B cell (primary cell): ENCODE measurements at regions of chr5 and their contacts with region 1.

Region 1: GRCh38 chr5:96807075-96807654 is 580 bp downstream of the ERAP1 start:
- DNase-seq: no peak
- ATAC-seq: peak; percentile 19
- H3K4me3 ChIP-seq: peak overlapping the region; percentile 47 to 86 (median 73)
- H3K4me3 Mint-ChIP-seq: peak overlapping the region; percentile 90
- H3K27ac ChIP-seq: peak overlapping the region; percentile 86 to 90
- H3K27ac Mint-ChIP-seq: peak overlapping the region; percentile 99
- H3K4me1 ChIP-seq: peaks cover 25 to 32% of the 10 kb centered on the region in 2 donors
- H3K4me1 Mint-ChIP-seq: peaks cover 49% of the 10 kb centered on the region
- H3K27me3 ChIP-seq: no peaks in the 10 kb centered on the region
- H3K27me3 Mint-ChIP-seq: no peaks in the 10 kb centered on the region
- CTCF ChIP-seq: no peak

Region 2: DNA sequence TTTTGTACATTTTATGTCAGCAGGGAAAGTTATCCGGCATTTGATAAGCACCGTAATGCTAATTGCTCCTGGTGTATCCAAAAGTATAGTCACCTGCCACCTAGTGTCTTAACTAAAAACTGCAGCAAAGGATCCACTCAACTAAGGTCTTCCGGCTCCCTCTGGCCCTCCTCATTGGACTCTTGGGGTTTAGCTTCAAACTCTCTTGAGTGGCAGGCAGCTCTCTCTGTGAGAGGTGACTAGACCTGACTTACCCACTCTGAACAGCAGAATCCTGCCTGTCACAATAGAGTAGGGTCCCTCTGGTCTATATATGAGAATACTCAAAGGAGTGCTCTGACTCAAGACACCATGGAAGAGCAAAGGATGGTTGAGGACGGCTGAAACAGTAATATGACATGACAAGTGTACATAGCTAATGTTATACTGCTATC is 205.3 kb before region 1 on chr5:
- CTCF ChIA-PET with region 1: no interaction called
- POLR2A ChIA-PET with region 1: no interaction called
- intact Hi-C with region 1: no loop called
- DNase-seq: peak; percentile 72
- ATAC-seq: peak; percentile 70
- H3K4me3 ChIP-seq: no peak overlapping the region
- H3K4me3 Mint-ChIP-seq: no peak overlapping the region
- H3K27ac ChIP-seq: no peak overlapping the region
- H3K27ac Mint-ChIP-seq: no peak overlapping the region
- H3K4me1 ChIP-seq: no peaks in the 10 kb centered on the region
- H3K4me1 Mint-ChIP-seq: no peaks in the 10 kb centered on the region
- H3K27me3 ChIP-seq: peaks cover 0 to 7% (median 0%) of the 10 kb centered on the region in 4 experiments
- H3K27me3 Mint-ChIP-seq: peaks cover 22% of the 10 kb centered on the region
- CTCF ChIP-seq: peak; percentile 90

Region 3: GRCh38 chr5:96876292-96876850 is 69.2 kb after region 1 on chr5 and contains the start of gene ERAP2:
- CTCF ChIA-PET with region 1: interaction called, 3 read pairs
- POLR2A ChIA-PET with region 1: interaction called, 14 read pairs
- intact Hi-C with region 1: loop called (anchors 1 kb)
- DNase-seq: peak; percentile 76
- ATAC-seq: peak; percentile 65
- H3K4me3 ChIP-seq: peak within 1 kb of the TSS; percentile 66 to 100 (median 84)
- H3K4me3 Mint-ChIP-seq: peak within 1 kb of the TSS; percentile 97
- H3K27ac ChIP-seq: peak within 1 kb of the TSS; percentile 69 to 75
- H3K27ac Mint-ChIP-seq: peak within 1 kb of the TSS; percentile 92
- H3K4me1 ChIP-seq: peaks cover 50 to 53% of the 10 kb centered on the region in 2 donors
- H3K4me1 Mint-ChIP-seq: peaks cover 74% of the 10 kb centered on the region
- H3K27me3 ChIP-seq: no peaks in the 10 kb centered on the region
- H3K27me3 Mint-ChIP-seq: no peaks in the 10 kb centered on the region
- CTCF ChIP-seq: no peak
- total RNA-seq, gene ERAP2: 74.2 and 76.5 TPM in 2 replicates

Region 4: GRCh38 chr5:97009212-97009898 is 202.2 kb after region 1 on chr5:
- CTCF ChIA-PET with region 1: no interaction called
- POLR2A ChIA-PET with region 1: interaction called, 17 read pairs
- intact Hi-C with region 1: no loop called
- DNase-seq: peak; percentile 81
- ATAC-seq: peak; percentile 68
- H3K4me3 ChIP-seq: peak overlapping the region in 2 of 5 experiments; percentile 11 to 44
- H3K4me3 Mint-ChIP-seq: peak overlapping the region; percentile 69
- H3K27ac ChIP-seq: peak overlapping the region; percentile 65 to 88
- H3K27ac Mint-ChIP-seq: peak overlapping the region; percentile 81
- H3K4me1 ChIP-seq: peaks cover 16 to 23% of the 10 kb centered on the region in 2 donors
- H3K4me1 Mint-ChIP-seq: peaks cover 26% of the 10 kb centered on the region
- H3K27me3 ChIP-seq: no peaks in the 10 kb centered on the region
- H3K27me3 Mint-ChIP-seq: no peaks in the 10 kb centered on the region
- CTCF ChIP-seq: no peak

Region 5: DNA sequence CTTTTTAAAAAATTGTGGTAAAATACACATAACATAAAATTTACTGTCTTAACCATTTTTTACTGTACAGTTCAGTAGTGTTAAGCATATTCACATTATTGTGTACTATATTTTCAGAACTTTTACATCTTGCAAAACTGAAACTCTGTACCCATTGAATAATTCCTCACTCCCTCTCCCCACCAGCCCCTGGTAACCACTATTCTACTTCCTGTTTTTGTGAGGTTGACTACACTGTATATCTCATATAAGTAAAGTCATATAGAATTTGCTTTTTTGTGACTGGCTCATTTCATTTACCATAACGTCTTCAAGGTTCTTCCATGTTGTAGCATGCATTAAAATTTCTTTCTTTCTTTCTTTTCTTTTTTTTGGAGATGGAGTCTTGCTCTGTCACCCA is 215.7 kb after region 1 on chr5:
- CTCF ChIA-PET with region 1: no interaction called
- POLR2A ChIA-PET with region 1: no interaction called
- intact Hi-C with region 1: no loop called
- DNase-seq: no peak
- ATAC-seq: peak; percentile 54
- H3K4me3 ChIP-seq: no peak overlapping the region
- H3K4me3 Mint-ChIP-seq: no peak overlapping the region
- H3K27ac ChIP-seq: no peak overlapping the region
- H3K27ac Mint-ChIP-seq: no peak overlapping the region
- H3K4me1 ChIP-seq: peaks cover 5% of the 10 kb centered on the region in 2 donors
- H3K4me1 Mint-ChIP-seq: peaks cover 7% of the 10 kb centered on the region
- H3K27me3 ChIP-seq: no peaks in the 10 kb centered on the region
- H3K27me3 Mint-ChIP-seq: no peaks in the 10 kb centered on the region
- CTCF ChIP-seq: no peak

Region 6: GRCh38 chr5:97183100-97183929 is 376.1 kb after region 1 on chr5 and contains the start of gene RIOK2:
- CTCF ChIA-PET with region 1: no interaction called
- POLR2A ChIA-PET with region 1: interaction called, 3 read pairs
- intact Hi-C with region 1: loop called (anchors 1 kb)
- DNase-seq: peak; percentile 93
- ATAC-seq: peak; percentile 87
- H3K4me3 ChIP-seq: peak within 1 kb of the TSS; percentile 68 to 96 (median 88)
- H3K4me3 Mint-ChIP-seq: peak within 1 kb of the TSS; percentile 97
- H3K27ac ChIP-seq: peak within 1 kb of the TSS; percentile 91 to 99
- H3K27ac Mint-ChIP-seq: peak within 1 kb of the TSS; percentile 100
- H3K4me1 ChIP-seq: peaks cover 12 to 15% of the 10 kb centered on the region in 2 donors
- H3K4me1 Mint-ChIP-seq: peaks cover 33% of the 10 kb centered on the region
- H3K27me3 ChIP-seq: no peaks in the 10 kb centered on the region
- H3K27me3 Mint-ChIP-seq: no peaks in the 10 kb centered on the region
- CTCF ChIP-seq: no peak
- total RNA-seq, gene RIOK2: 32.8 and 37.2 TPM in 2 replicates

Region 7: DNA sequence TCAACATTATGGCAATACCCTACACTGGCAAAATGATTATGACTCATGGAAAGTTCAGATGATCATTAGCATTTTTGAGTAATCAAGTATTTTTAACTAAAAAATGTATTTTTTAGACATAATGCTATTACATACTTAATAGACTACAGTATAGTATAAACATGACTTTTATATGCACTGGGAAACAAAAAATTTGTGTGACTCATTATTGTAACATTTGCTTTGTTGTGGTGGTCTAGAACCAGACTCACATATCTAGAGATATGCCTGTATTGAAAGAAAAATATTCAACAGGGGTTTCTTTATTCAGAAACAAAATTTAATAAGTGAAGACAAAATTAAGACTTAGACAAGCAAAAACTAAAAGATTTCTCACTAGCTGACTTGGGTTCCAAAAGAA is 761.2 kb after region 1 on chr5:
- CTCF ChIA-PET with region 1: no interaction called
- POLR2A ChIA-PET with region 1: no interaction called
- intact Hi-C with region 1: no loop called
- DNase-seq: no peak
- ATAC-seq: no peak
- H3K4me3 ChIP-seq: no peak overlapping the region
- H3K4me3 Mint-ChIP-seq: no peak overlapping the region
- H3K27ac ChIP-seq: no peak overlapping the region
- H3K27ac Mint-ChIP-seq: no peak overlapping the region
- H3K4me1 ChIP-seq: no peaks in the 10 kb centered on the region
- H3K4me1 Mint-ChIP-seq: no peaks in the 10 kb centered on the region
- H3K27me3 ChIP-seq: no peaks in the 10 kb centered on the region
- H3K27me3 Mint-ChIP-seq: no peaks in the 10 kb centered on the region
- CTCF ChIP-seq: no peak